Common myeloid progenitor, CD34-positive (primary cell): ENCODE measurements at regions of chr6 and their contacts with region 1.

Region 1: DNA sequence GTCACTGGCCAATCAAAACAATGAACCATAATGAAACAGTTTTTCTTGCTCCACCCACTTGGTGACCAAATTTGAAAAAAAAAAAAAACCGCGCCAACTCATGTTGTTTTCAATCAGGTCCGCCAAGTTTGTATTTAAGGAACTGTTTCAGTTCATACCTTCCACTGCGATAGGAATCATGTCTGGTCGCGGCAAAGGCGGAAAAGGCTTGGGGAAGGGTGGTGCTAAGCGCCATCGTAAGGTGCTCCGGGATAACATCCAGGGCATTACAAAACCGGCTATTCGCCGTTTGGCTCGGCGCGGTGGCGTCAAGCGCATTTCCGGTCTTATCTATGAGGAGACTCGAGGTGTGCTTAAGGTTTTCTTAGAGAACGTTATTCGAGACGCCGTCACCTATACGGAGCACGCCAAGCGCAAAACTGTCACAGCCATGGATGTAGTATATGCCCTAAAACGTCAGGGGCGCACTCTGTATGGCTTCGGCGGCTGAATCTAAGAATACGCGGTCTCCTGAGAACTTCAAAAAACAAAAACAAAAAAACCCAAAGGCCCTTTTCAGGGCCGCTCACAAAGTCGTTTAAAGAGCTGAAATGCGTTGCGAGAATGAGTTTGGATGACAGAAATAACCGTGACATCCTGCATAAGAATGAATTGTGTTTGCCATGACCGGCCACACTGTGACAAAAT is 16.7 kb downstream of the HFE start:
- DNase-seq: peak; percentile 95 to 98 (median 97)
- H3K4me3 ChIP-seq: peak overlapping the region; percentile 53 to 84 (median 67)
- H3K27ac ChIP-seq: peak overlapping the region; percentile 65 to 81
- H3K4me1 ChIP-seq: peaks cover 6 to 20% (median 14%) of the 10 kb centered on the region in 4 experiments
- H3K27me3 ChIP-seq: no peaks in the 10 kb centered on the region

Region 2: GRCh38 chr6:26054857-26055669 is 48.9 kb before region 1 on chr6:
- CTCF ChIA-PET with region 1: interaction called, 637 read pairs
- POLR2A ChIA-PET with region 1: interaction called, 3 read pairs
- DNase-seq: peak; percentile 95 to 97 (median 97)
- H3K4me3 ChIP-seq: peak overlapping the region; percentile 76 to 100 (median 88)
- H3K27ac ChIP-seq: peak overlapping the region; percentile 68 to 93
- H3K4me1 ChIP-seq: peaks cover 8 to 33% (median 22%) of the 10 kb centered on the region in 4 experiments
- H3K27me3 ChIP-seq: no peaks in the 10 kb centered on the region

Region 3: GRCh38 chr6:26087284-26088115 is 16.4 kb before region 1 on chr6 and contains the start of gene HFE:
- CTCF ChIA-PET with region 1: interaction called, 637 read pairs
- POLR2A ChIA-PET with region 1: no interaction called
- DNase-seq: peak; percentile 47 to 76 (median 65)
- H3K4me3 ChIP-seq: peak within 1 kb of the TSS; percentile 57 to 88 (median 79)
- H3K27ac ChIP-seq: peak within 1 kb of the TSS in 1 of 2 experiments; percentile 51
- H3K4me1 ChIP-seq: peaks cover 0 to 10% (median 8%) of the 10 kb centered on the region in 4 experiments
- H3K27me3 ChIP-seq: no peaks in the 10 kb centered on the region

Region 4: DNA sequence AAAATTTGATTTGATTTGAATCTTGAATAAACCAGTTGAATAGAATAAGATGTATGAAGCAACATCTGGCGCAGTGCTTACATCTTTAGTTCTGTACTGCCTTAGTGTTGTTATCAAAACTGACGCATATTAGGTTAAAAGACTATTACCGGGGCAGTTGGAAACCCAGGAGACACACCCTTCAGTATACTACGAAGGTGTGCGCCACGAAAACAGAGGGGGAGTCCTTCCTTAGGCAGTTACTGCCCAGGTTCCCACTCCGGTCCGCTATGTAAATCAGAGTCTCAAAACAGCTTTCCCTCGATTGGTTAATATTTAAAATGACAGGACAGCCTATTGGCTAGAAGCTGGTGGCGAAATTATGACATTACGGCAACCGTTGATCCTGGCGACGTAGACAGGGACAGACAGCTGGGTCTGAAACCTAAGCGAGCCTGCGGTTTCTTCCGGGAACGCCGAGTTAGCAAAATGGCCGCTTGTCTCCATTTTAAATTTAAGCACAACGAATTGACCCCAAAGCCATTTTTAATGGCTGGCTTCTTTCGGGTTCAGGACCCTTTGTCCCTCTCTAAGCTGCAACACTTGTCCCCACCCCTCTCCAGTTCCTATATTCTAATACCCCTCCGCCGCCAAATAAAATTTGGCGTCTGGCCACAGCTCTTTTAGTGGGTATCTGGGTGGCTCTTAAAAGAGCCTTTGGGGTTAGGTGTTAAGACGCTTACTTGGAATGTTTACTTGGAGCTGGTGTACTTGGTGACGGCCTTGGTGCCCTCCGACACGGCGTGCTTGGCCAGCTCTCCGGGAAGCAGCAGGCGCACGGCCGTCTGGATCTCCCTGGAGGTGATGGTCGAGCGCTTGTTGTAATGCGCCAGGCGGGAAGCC is 19.1 kb after region 1 on chr6:
- CTCF ChIA-PET with region 1: interaction called, 14 read pairs
- POLR2A ChIA-PET with region 1: interaction called, 22 read pairs
- DNase-seq: peak; percentile 97 to 99 (median 98)
- H3K4me3 ChIP-seq: peak overlapping the region; percentile 56 to 100 (median 96)
- H3K27ac ChIP-seq: peak overlapping the region; percentile 84 to 96
- H3K4me1 ChIP-seq: peaks cover 11 to 38% (median 26%) of the 10 kb centered on the region in 4 experiments
- H3K27me3 ChIP-seq: no peaks in the 10 kb centered on the region

Region 5: GRCh38 chr6:26141378-26141904 is 37.5 kb after region 1 on chr6:
- CTCF ChIA-PET with region 1: no interaction called
- POLR2A ChIA-PET with region 1: no interaction called
- DNase-seq: no peak
- H3K4me3 ChIP-seq: no peak overlapping the region
- H3K27ac ChIP-seq: no peak overlapping the region
- H3K4me1 ChIP-seq: no peaks in the 10 kb centered on the region
- H3K27me3 ChIP-seq: no peaks in the 10 kb centered on the region